Activated T-helper 1 cell treated with anti-CD3 and anti-CD28 coated beads, Interleukin-12 subunit alpha, Interleukin-12 subunit beta, Interleukin-2, Interleukin-4 antibody, amounts not matched to agents 30 ng/mL and 10 ng/mL and 1 ng/mL, durations not matched to agents 14 hours and 24 hours and 36 hours (primary cell): ENCODE measurements at regions of chr20 and their contacts with region 1.

Region 1: DNA sequence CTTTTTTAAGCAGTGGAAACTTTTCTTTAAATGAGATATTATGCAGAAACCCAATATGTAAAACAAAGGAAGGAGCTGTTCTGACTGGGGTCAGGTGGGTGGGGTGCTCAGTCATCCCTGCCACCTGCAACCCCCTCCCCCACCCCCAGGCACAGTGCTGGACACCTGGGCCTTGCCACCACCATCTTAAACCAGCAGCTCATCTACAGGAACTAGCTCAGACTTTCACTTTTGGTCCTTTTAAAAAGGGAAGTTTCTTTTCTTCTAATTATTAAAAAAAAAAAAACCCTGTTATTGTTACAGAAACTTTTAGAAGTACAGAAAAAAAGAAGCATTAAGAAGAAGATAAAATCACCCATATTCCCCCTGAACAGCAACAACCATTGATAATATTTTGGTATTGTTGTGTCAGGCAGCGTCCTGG is 37.1 kb downstream of the PPP1R16B start:
- DNase-seq: no peak
- H3K4me3 Mint-ChIP-seq: peak overlapping the region; percentile 78
- H3K27ac Mint-ChIP-seq: peak overlapping the region; percentile 97
- H3K4me1 Mint-ChIP-seq: peaks cover 82% of the 10 kb centered on the region
- H3K27me3 Mint-ChIP-seq: no peaks in the 10 kb centered on the region

Region 2: GRCh38 chr20:38631155-38632022 is 211.2 kb before region 1 on chr20:
- intact Hi-C with region 1: no loop called
- DNase-seq: no peak
- H3K4me3 Mint-ChIP-seq: no peak overlapping the region
- H3K27ac Mint-ChIP-seq: no peak overlapping the region
- H3K4me1 Mint-ChIP-seq: peaks cover 5% of the 10 kb centered on the region
- H3K27me3 Mint-ChIP-seq: peaks cover 7% of the 10 kb centered on the region

Region 3: DNA sequence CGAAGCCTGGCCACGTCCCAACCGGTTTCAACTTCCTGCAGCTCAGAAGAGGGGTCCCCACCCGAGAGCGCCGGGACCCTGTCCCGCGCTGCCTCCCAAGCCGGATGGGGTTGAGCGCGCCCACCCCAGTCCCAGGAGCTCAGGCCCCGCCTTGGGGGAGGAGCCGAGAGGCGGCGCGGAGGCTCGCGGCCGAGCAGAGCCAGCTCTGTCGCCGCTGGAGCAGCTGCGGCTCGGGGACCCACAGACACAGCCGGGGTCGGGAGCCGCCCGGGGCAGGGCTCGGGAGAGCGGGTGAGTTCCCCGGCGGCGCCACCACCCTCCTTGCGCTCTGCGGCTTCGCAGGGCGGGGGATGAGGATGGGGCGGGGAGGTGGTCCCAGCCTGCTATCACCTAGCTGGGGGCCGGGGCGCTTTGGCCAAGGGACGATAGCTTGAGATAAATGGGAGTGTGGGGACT is 37.0 kb before region 1 on chr20 and contains the start of gene PPP1R16B:
- intact Hi-C with region 1: loop called (anchors 1 kb)
- DNase-seq: peak; percentile 79
- H3K4me3 Mint-ChIP-seq: peak within 1 kb of the TSS; percentile 90
- H3K27ac Mint-ChIP-seq: peak within 1 kb of the TSS; percentile 96
- H3K4me1 Mint-ChIP-seq: peaks cover 64% of the 10 kb centered on the region
- H3K27me3 Mint-ChIP-seq: no peaks in the 10 kb centered on the region
- total RNA-seq, gene PPP1R16B: 139 and 143 TPM in 2 replicates

Region 4: GRCh38 chr20:38825901-38826625 is 16.5 kb before region 1 on chr20:
- intact Hi-C with region 1: loop called (anchors 2 kb)
- DNase-seq: no peak
- H3K4me3 Mint-ChIP-seq: no peak overlapping the region
- H3K27ac Mint-ChIP-seq: peak overlapping the region; percentile 48
- H3K4me1 Mint-ChIP-seq: peaks cover 92% of the 10 kb centered on the region
- H3K27me3 Mint-ChIP-seq: no peaks in the 10 kb centered on the region

Region 5: GRCh38 chr20:38863024-38863851 is 20.7 kb after region 1 on chr20:
- intact Hi-C with region 1: loop called (anchors 2 kb)
- DNase-seq: peak; percentile 45
- H3K4me3 Mint-ChIP-seq: peak overlapping the region; percentile 50
- H3K27ac Mint-ChIP-seq: peak overlapping the region; percentile 89
- H3K4me1 Mint-ChIP-seq: peaks cover 68% of the 10 kb centered on the region
- H3K27me3 Mint-ChIP-seq: peaks cover 1% of the 10 kb centered on the region

Region 6: DNA sequence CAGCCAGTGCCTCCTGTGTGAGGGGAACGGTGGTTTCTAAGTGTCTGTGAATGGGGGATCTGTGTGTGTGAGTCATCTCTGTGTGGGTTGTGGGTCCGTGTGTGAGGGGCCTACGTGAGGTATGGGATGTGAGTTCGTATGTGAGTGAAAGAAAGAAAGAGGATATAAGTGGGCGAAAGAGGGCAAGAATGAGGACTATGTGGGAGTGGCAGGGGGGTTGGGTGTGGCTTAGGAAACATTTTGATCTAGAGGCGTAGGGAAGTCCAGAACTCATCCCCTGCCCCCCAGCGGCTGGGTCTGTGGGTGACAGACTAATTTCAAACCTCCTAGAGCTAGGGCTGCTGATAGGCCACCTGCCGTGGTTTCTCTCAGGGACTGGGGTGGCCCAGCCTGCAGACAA is 155.1 kb after region 1 on chr20:
- intact Hi-C with region 1: loop called (anchors 5 kb)
- DNase-seq: peak; percentile 15
- H3K4me3 Mint-ChIP-seq: peak overlapping the region; percentile 46
- H3K27ac Mint-ChIP-seq: peak overlapping the region; percentile 71
- H3K4me1 Mint-ChIP-seq: peaks cover 38% of the 10 kb centered on the region
- H3K27me3 Mint-ChIP-seq: no peaks in the 10 kb centered on the region